ENCODE measurements at regions of chr1 and their contacts with region 1.

Region 1: DNA sequence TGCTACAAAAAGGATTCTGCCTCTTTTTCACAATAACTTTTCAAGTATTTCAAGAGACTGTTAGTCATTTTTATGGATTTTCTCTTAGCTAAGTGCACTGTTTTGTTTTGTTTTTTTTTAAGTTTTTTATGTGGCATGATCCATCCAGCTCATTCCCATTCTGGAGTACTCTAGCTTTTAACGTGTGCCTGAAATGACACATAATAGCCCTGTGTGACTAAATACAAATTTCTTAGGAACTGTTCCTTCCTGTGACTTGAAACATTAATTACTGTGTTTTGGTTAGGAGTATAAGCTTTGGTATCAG is 143.9 kb downstream of the HS2ST1 start:
- DNase-seq: no peak
- H3K4me3 ChIP-seq: peak overlapping the region; percentile 58
- H3K27ac ChIP-seq: peak overlapping the region; percentile 98
- H3K4me1 ChIP-seq: peaks cover 94% of the 10 kb centered on the region
- CTCF ChIP-seq: no peak

Region 2: GRCh38 chr1:86429835-86430234 is 628.5 kb before region 1 on chr1:
- CTCF ChIA-PET with region 1: no interaction called
- POLR2A ChIA-PET with region 1: no interaction called
- intact Hi-C with region 1: no loop called
- DNase-seq: no peak
- H3K4me3 ChIP-seq: no peak overlapping the region
- H3K27ac ChIP-seq: no peak overlapping the region
- H3K4me1 ChIP-seq: no peaks in the 10 kb centered on the region
- CTCF ChIP-seq: no peak

Region 3: DNA sequence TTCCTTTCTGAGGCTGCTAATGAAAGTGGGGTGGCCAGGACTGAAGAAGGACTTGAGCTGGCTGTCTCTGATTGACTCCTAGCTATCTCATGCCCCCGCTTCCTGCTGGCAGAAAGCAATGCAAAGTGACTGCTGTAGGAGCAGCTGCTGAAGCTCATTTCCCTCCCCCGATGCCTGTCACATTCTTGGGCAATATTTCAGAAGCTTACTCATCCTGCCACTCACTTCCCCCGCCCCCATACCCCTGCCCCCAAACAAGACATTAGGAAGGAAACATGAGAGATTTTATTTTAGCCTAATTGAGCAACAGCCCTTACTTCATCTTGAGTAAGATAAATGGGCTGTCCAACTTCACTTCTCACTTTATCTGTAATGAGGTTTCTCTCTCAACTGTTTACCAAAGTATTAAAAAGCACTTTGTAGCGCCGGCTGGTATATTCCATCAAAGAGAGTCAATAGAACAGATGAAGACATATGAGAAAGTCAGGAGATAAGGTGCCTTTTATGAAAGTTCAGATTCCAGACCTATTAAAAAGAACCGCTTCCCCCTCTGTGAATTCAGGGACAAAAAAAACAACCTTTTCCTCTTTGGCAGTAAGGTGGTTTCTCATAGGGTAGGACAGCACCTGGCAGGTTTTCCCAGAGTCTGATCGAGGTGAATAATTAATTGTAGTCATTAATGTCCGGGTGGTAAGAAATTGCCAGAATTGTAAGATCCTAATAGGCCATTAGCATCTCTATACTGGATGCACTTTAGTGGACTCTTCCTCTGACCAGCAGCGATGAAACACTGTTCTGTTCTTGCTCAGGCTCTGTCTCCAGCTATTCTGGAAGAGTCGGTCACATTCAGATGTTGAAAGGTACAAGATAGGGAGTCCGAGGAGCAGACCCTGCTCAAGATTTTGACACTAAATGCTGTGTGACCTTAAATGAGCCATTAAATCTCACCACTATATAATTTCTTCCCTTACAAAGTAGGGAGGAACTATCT is 283.7 kb before region 1 on chr1:
- CTCF ChIA-PET with region 1: no interaction called
- POLR2A ChIA-PET with region 1: no interaction called
- intact Hi-C with region 1: loop called (anchors 10 kb)
- DNase-seq: peak; percentile 93
- H3K4me3 ChIP-seq: peak overlapping the region; percentile 56
- H3K27ac ChIP-seq: peak overlapping the region; percentile 89
- H3K4me1 ChIP-seq: peaks cover 47% of the 10 kb centered on the region
- CTCF ChIP-seq: no peak

Region 4: GRCh38 chr1:86833461-86834215 is 224.7 kb before region 1 on chr1:
- CTCF ChIA-PET with region 1: no interaction called
- POLR2A ChIA-PET with region 1: interaction called, 9 read pairs
- intact Hi-C with region 1: loop called (anchors 5 kb)
- DNase-seq: peak; percentile 92
- H3K4me3 ChIP-seq: peak overlapping the region; percentile 73
- H3K27ac ChIP-seq: peak overlapping the region; percentile 66
- H3K4me1 ChIP-seq: peaks cover 35% of the 10 kb centered on the region
- CTCF ChIP-seq: peak; percentile 87

Region 5: GRCh38 chr1:86872086-86872485 is 186.2 kb before region 1 on chr1:
- CTCF ChIA-PET with region 1: no interaction called
- POLR2A ChIA-PET with region 1: no interaction called
- intact Hi-C with region 1: no loop called
- DNase-seq: no peak
- H3K4me3 ChIP-seq: no peak overlapping the region
- H3K27ac ChIP-seq: no peak overlapping the region
- H3K4me1 ChIP-seq: peaks cover 3% of the 10 kb centered on the region
- CTCF ChIP-seq: no peak

Region 6: GRCh38 chr1:86926883-86927282 is 131.4 kb before region 1 on chr1:
- CTCF ChIA-PET with region 1: no interaction called
- POLR2A ChIA-PET with region 1: no interaction called
- intact Hi-C with region 1: no loop called
- DNase-seq: no peak
- H3K4me3 ChIP-seq: no peak overlapping the region
- H3K27ac ChIP-seq: no peak overlapping the region
- H3K4me1 ChIP-seq: peaks cover 3% of the 10 kb centered on the region
- CTCF ChIP-seq: no peak

Region 7: DNA sequence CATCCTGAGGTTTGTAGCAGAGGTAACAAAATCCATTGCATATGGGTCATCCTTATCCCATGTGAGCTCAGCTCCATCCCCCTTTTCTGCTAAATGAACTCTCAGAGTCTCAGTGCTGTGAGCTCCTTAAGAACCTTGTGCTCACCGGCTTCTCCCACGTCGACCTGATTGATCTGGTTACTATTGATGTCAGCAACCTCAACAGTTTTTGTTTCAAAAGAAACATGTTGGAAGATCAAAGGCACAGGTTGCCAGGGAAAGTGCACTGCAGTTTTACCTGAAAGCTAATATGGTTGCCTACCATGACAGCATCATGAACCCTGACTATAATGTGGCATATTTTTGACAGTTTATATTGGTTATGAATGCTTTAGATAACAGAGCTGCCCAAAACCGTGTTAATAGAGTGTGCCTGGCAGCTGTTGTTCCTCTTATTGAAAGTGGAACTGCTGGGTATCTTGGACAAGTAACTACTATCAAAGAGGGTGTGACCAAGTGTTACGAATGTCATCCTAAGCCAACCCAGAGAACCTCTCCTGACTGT is 12.5 kb before region 1 on chr1:
- CTCF ChIA-PET with region 1: no interaction called
- POLR2A ChIA-PET with region 1: interaction called, 29 read pairs
- intact Hi-C with region 1: no loop called
- DNase-seq: peak; percentile 48
- H3K4me3 ChIP-seq: no peak overlapping the region
- H3K27ac ChIP-seq: peak overlapping the region; percentile 46
- H3K4me1 ChIP-seq: peaks cover 72% of the 10 kb centered on the region
- CTCF ChIP-seq: no peak

Region 8: GRCh38 chr1:87074001-87074795 is 15.9 kb after region 1 on chr1:
- CTCF ChIA-PET with region 1: no interaction called
- POLR2A ChIA-PET with region 1: interaction called, 13 read pairs
- intact Hi-C with region 1: no loop called
- DNase-seq: no peak
- H3K4me3 ChIP-seq: no peak overlapping the region
- H3K27ac ChIP-seq: no peak overlapping the region
- H3K4me1 ChIP-seq: peaks cover 19% of the 10 kb centered on the region
- CTCF ChIP-seq: no peak

Region 9: DNA sequence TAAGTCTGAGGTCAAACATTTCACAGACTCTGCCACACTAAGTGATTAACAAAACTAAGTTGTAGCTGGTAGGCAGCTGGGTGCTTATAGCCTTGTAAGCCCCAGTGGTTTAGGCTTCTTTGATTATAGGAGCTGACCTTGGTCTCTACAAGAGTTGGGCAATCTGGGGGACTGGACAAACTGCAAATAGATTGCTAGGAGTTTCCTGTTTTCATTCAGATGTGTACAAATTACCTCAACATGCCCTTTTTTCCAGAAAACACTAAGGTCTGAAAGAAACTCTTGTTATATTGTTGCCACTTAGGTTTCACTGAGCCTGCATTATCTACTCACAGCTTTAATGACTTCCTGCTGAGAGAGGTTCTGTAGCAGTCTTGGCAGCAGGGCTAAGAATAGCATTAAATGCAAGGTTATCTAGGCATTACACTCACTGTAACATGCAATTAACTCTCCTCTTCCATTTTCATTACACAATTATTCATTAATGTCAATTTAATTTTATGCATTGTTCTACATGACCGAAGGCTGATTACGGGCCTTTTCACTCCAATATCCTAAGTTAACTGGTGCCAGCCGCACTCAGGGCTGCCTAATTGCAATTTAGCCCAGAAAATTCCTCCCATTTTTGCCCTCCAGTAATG is 584.4 kb after region 1 on chr1:
- CTCF ChIA-PET with region 1: no interaction called
- POLR2A ChIA-PET with region 1: no interaction called
- intact Hi-C with region 1: no loop called
- DNase-seq: no peak
- H3K4me3 ChIP-seq: no peak overlapping the region
- H3K27ac ChIP-seq: no peak overlapping the region
- H3K4me1 ChIP-seq: no peaks in the 10 kb centered on the region
- CTCF ChIP-seq: no peak